ENCODE measurements at regions of chr9 and their contacts with region 1.

Region 1: GRCh38 chr9:112486221-112487007 is at the start of gene KIAA1958:
- DNase-seq: peak; percentile 86
- H3K4me3 Mint-ChIP-seq: peak within 1 kb of the TSS; percentile 98
- H3K27ac Mint-ChIP-seq: peak within 1 kb of the TSS; percentile 97
- H3K4me1 Mint-ChIP-seq: peaks cover 33% of the 10 kb centered on the region
- H3K27me3 Mint-ChIP-seq: no peaks in the 10 kb centered on the region
- total RNA-seq, gene KIAA1958: 10.7 and 11.4 TPM in 2 replicates

Region 2: DNA sequence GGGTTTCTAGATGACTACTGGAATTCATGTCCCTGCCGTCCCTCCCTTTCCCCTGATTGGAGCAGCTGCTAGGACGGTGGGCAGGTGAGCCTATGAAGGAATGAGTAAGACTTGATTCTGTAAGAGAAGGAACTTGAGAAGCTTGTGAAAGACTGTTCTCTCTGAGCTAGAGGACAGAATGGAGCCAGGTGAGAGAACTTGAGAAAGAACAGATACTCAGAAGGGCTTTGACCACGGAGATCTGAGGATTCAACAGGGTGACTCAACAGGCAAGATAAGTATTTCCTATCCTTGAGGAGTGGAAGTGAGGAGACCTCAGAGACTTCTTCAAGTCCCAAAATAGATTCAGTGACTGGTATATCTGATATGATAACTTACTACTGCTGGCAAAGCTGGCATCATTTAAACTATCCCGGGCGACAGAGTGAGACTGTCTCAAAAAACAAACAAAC is 64.6 kb before region 1 on chr9:
- intact Hi-C with region 1: no loop called
- DNase-seq: no peak
- H3K4me3 Mint-ChIP-seq: no peak overlapping the region
- H3K27ac Mint-ChIP-seq: no peak overlapping the region
- H3K4me1 Mint-ChIP-seq: no peaks in the 10 kb centered on the region
- H3K27me3 Mint-ChIP-seq: no peaks in the 10 kb centered on the region

Region 3: GRCh38 chr9:112750111-112750767 is 263.8 kb after region 1 on chr9 and contains the start of gene SNX30:
- intact Hi-C with region 1: loop called (anchors 5 kb)
- DNase-seq: peak; percentile 79
- H3K4me3 Mint-ChIP-seq: peak within 1 kb of the TSS; percentile 84
- H3K27ac Mint-ChIP-seq: peak within 1 kb of the TSS; percentile 86
- H3K4me1 Mint-ChIP-seq: peaks cover 52% of the 10 kb centered on the region
- H3K27me3 Mint-ChIP-seq: peaks cover 3% of the 10 kb centered on the region
- total RNA-seq, gene SNX30: 2.4 and 2.8 TPM in 2 replicates

Region 4: GRCh38 chr9:112793213-112793810 is 306.9 kb after region 1 on chr9:
- intact Hi-C with region 1: loop called (anchors 5 kb)
- DNase-seq: peak; percentile 59
- H3K4me3 Mint-ChIP-seq: no peak overlapping the region
- H3K27ac Mint-ChIP-seq: no peak overlapping the region
- H3K4me1 Mint-ChIP-seq: peaks cover 4% of the 10 kb centered on the region
- H3K27me3 Mint-ChIP-seq: no peaks in the 10 kb centered on the region

Region 5: GRCh38 chr9:112831281-112831851 is 345.0 kb after region 1 on chr9:
- intact Hi-C with region 1: no loop called
- DNase-seq: no peak
- H3K4me3 Mint-ChIP-seq: no peak overlapping the region
- H3K27ac Mint-ChIP-seq: no peak overlapping the region
- H3K4me1 Mint-ChIP-seq: peaks cover 3% of the 10 kb centered on the region
- H3K27me3 Mint-ChIP-seq: no peaks in the 10 kb centered on the region

Region 6: GRCh38 chr9:113221003-113221799 is 734.8 kb after region 1 on chr9 and contains the starts of genes FKBP15 and SLC31A1:
- intact Hi-C with region 1: loop called (anchors 5 kb)
- DNase-seq: peak; percentile 94
- H3K4me3 Mint-ChIP-seq: peak within 1 kb of the TSS; percentile 92
- H3K27ac Mint-ChIP-seq: peak within 1 kb of the TSS; percentile 78
- H3K4me1 Mint-ChIP-seq: peaks cover 41% of the 10 kb centered on the region
- H3K27me3 Mint-ChIP-seq: no peaks in the 10 kb centered on the region
- total RNA-seq, gene FKBP15: 39.6 and 40.4 TPM in 2 replicates
- total RNA-seq, gene SLC31A1: 18.0 and 20.0 TPM in 2 replicates